ENCODE measurements at regions of chr2 and their contacts with region 1.

Region 1: DNA sequence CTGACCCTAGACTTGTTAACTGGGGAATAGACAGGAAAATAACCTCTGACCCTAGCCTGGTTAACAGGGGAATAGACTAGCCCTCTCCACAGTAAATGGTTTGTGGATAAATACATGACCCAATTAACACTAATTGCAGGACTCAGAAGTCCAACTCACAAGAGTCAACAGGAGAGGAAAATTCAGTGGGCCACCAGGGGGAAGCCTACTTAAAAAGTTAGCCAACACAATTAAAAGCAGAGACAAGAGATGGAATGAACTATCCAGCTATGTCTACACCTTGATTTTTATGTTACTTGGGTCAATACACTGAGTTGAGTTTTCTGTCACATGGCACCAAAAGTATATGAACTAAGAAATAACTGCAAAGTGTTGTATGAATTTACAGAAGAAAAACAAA is 158.8 kb upstream of the SLC39A10 start:
- DNase-seq: peak; percentile 75
- ATAC-seq: peak; percentile 36
- H3K4me3 ChIP-seq: no peak overlapping the region
- H3K4me3 Mint-ChIP-seq: no peak overlapping the region
- H3K27ac ChIP-seq: no peak overlapping the region
- H3K27ac Mint-ChIP-seq: peak overlapping the region; percentile 1
- H3K4me1 ChIP-seq: peaks cover 5 to 16% of the 10 kb centered on the region in 2 donors
- H3K4me1 Mint-ChIP-seq: peaks cover 19% of the 10 kb centered on the region
- H3K27me3 ChIP-seq: no peaks in the 10 kb centered on the region
- H3K27me3 Mint-ChIP-seq: no peaks in the 10 kb centered on the region
- CTCF ChIP-seq: peak; percentile 72

Region 2: DNA sequence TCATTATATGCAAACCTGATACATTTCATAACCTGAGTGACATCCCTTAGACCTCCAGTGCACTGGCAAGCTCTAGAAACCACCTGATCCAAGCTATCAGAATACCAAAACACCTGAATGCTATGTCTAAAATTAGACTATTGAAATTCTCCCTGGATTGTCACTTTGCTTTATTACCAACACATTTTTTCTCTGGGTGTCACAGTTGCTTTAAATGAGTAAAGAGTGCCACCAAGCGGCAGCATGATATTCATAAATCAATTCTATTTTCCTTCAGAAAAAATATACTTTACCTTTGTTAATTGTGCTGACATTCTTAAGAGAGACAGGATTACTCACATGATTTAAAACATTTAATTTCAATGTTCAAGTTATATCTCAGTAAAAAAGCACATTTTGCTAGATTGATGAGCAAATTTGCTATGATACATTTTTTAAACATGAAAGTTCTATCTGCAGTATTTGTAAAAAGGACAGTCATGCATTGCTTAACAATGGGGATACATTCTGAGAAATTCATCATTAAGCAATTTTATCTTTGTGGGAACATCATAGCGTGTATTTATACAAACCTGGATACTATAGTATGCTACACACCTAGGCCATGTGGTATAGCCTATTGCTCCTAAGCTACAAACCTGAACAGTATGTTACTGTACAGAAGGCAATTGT is 179.6 kb before region 1 on chr2:
- CTCF ChIA-PET with region 1: no interaction called
- POLR2A ChIA-PET with region 1: no interaction called
- intact Hi-C with region 1: no loop called
- DNase-seq: peak; percentile 53
- ATAC-seq: no peak
- H3K4me3 ChIP-seq: no peak overlapping the region
- H3K4me3 Mint-ChIP-seq: no peak overlapping the region
- H3K27ac ChIP-seq: no peak overlapping the region
- H3K27ac Mint-ChIP-seq: no peak overlapping the region
- H3K4me1 ChIP-seq: no peaks in the 10 kb centered on the region
- H3K4me1 Mint-ChIP-seq: no peaks in the 10 kb centered on the region
- H3K27me3 ChIP-seq: no peaks in the 10 kb centered on the region
- H3K27me3 Mint-ChIP-seq: no peaks in the 10 kb centered on the region
- CTCF ChIP-seq: peak; percentile 76

Region 3: DNA sequence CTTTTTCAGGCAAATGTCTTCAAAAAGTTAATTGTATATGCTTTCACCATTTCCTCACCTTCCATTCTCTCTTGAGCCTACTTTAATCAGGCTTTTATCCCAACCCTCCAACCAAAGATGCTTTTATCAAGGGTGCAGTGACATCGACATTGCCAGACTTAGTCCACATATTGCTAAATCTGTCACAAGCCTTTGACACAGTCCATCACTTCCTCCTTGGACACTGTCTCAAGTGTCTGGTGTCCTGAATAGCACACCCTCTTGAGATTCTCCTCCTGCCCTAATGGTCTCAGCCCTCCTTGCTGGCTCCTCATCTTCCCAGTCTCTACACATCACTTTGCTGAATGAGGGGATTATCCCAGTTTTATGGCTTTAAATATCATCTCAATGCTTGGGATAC is 11.4 kb after region 1 on chr2:
- CTCF ChIA-PET with region 1: interaction called, 17 read pairs
- POLR2A ChIA-PET with region 1: no interaction called
- intact Hi-C with region 1: no loop called
- DNase-seq: no peak
- ATAC-seq: no peak
- H3K4me3 ChIP-seq: no peak overlapping the region
- H3K4me3 Mint-ChIP-seq: no peak overlapping the region
- H3K27ac ChIP-seq: no peak overlapping the region
- H3K27ac Mint-ChIP-seq: no peak overlapping the region
- H3K4me1 ChIP-seq: peaks cover 5 to 8% of the 10 kb centered on the region in 2 donors
- H3K4me1 Mint-ChIP-seq: peaks cover 9% of the 10 kb centered on the region
- H3K27me3 ChIP-seq: no peaks in the 10 kb centered on the region
- H3K27me3 Mint-ChIP-seq: no peaks in the 10 kb centered on the region
- CTCF ChIP-seq: no peak

Region 4: GRCh38 chr2:195559431-195559914 is 61.3 kb after region 1 on chr2:
- CTCF ChIA-PET with region 1: interaction called, 23 read pairs
- POLR2A ChIA-PET with region 1: no interaction called
- intact Hi-C with region 1: loop called (anchors 5 kb)
- DNase-seq: peak; percentile 83
- ATAC-seq: peak; percentile 66
- H3K4me3 ChIP-seq: peak overlapping the region in 1 of 5 experiments; percentile 37
- H3K4me3 Mint-ChIP-seq: peak overlapping the region; percentile 74
- H3K27ac ChIP-seq: peak overlapping the region; percentile 92 to 94
- H3K27ac Mint-ChIP-seq: peak overlapping the region; percentile 98
- H3K4me1 ChIP-seq: peaks cover 54 to 73% of the 10 kb centered on the region in 2 donors
- H3K4me1 Mint-ChIP-seq: peaks cover 58% of the 10 kb centered on the region
- H3K27me3 ChIP-seq: no peaks in the 10 kb centered on the region
- H3K27me3 Mint-ChIP-seq: no peaks in the 10 kb centered on the region
- CTCF ChIP-seq: no peak

Region 5: DNA sequence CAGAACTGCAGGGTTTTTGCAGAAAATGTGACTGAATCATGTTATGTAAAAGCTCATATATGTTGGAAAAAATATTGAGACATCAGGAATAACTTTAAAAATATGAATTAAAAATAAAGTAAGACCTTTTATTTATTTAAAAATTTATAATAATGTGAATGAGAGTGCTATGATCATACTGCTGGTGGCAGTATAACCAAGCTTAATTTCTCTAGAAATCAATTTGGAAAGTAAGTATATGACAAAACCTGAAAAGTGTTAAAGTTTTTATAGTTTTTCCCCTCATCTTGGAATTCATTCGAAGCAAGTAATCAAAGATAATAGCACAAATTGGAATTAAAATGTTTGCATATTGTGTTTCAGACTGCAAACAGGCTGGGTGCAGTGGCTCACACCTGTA is 166.4 kb after region 1 on chr2:
- CTCF ChIA-PET with region 1: interaction called, 192 read pairs
- POLR2A ChIA-PET with region 1: interaction called, 3 read pairs
- intact Hi-C with region 1: loop called (anchors 1 kb)
- DNase-seq: no peak
- ATAC-seq: no peak
- H3K4me3 ChIP-seq: no peak overlapping the region
- H3K4me3 Mint-ChIP-seq: no peak overlapping the region
- H3K27ac ChIP-seq: no peak overlapping the region
- H3K27ac Mint-ChIP-seq: peak overlapping the region; percentile 73
- H3K4me1 ChIP-seq: peaks cover 24 to 46% of the 10 kb centered on the region in 2 donors
- H3K4me1 Mint-ChIP-seq: peaks cover 53% of the 10 kb centered on the region
- H3K27me3 ChIP-seq: no peaks in the 10 kb centered on the region
- H3K27me3 Mint-ChIP-seq: no peaks in the 10 kb centered on the region
- CTCF ChIP-seq: peak; percentile 22

Region 6: DNA sequence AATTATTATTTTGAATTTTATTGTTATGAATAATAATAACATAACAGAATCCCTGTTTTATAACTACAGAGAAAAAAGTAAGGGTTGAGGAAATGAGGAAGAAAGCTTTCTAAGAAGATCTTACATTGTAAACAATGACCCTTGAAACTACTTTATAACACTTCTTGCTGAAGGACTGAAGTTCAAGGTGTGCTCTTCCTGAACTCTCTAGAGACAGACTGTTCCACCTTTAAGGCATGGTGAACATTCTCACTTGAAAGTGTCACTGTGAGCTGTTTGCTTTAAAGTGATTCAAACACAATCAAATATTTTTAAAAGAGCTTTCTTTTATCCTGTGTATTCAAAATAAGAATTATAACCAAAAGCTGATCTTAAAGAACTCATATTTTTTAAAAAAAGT is 439.0 kb after region 1 on chr2:
- CTCF ChIA-PET with region 1: interaction called, 9 read pairs
- POLR2A ChIA-PET with region 1: no interaction called
- intact Hi-C with region 1: loop called (anchors 1 kb)
- DNase-seq: no peak
- ATAC-seq: no peak
- H3K4me3 ChIP-seq: no peak overlapping the region
- H3K4me3 Mint-ChIP-seq: no peak overlapping the region
- H3K27ac ChIP-seq: no peak overlapping the region
- H3K27ac Mint-ChIP-seq: no peak overlapping the region
- H3K4me1 ChIP-seq: no peaks in the 10 kb centered on the region
- H3K4me1 Mint-ChIP-seq: no peaks in the 10 kb centered on the region
- H3K27me3 ChIP-seq: peaks cover 0 to 4% (median 0%) of the 10 kb centered on the region in 4 experiments
- H3K27me3 Mint-ChIP-seq: no peaks in the 10 kb centered on the region
- CTCF ChIP-seq: no peak

Measured in B cell (primary cell).